Activated naive CD4-positive, alpha-beta T cell treated with anti-CD3 and anti-CD28 coated beads for 36 hours (primary cell): ENCODE measurements at regions of chr1 and their contacts with region 1.

Region 1: GRCh38 chr1:176374967-176375569 is 87.9 kb upstream of the PAPPA2 start:
- DNase-seq: peak; percentile 87
- H3K4me3 Mint-ChIP-seq: no peak overlapping the region
- H3K27ac Mint-ChIP-seq: no peak overlapping the region
- H3K4me1 Mint-ChIP-seq: no peaks in the 10 kb centered on the region
- H3K27me3 Mint-ChIP-seq: peaks cover 10% of the 10 kb centered on the region

Region 2: GRCh38 chr1:175481126-175482066 is 893.7 kb before region 1 on chr1:
- CTCF ChIA-PET with region 1: no interaction called
- intact Hi-C with region 1: loop called (anchors 10 kb)
- DNase-seq: no peak
- H3K4me3 Mint-ChIP-seq: no peak overlapping the region
- H3K27ac Mint-ChIP-seq: no peak overlapping the region
- H3K4me1 Mint-ChIP-seq: no peaks in the 10 kb centered on the region
- H3K27me3 Mint-ChIP-seq: peaks cover 19% of the 10 kb centered on the region

Region 3: GRCh38 chr1:176460544-176461336 is 85.7 kb after region 1 on chr1:
- CTCF ChIA-PET with region 1: no interaction called
- intact Hi-C with region 1: no loop called
- DNase-seq: no peak
- H3K4me3 Mint-ChIP-seq: no peak overlapping the region
- H3K27ac Mint-ChIP-seq: no peak overlapping the region
- H3K4me1 Mint-ChIP-seq: no peaks in the 10 kb centered on the region
- H3K27me3 Mint-ChIP-seq: peaks cover 2% of the 10 kb centered on the region

Region 4: GRCh38 chr1:176485083-176485482 is 110.0 kb after region 1 on chr1:
- CTCF ChIA-PET with region 1: no interaction called
- intact Hi-C with region 1: no loop called
- DNase-seq: no peak
- H3K4me3 Mint-ChIP-seq: no peak overlapping the region
- H3K27ac Mint-ChIP-seq: no peak overlapping the region
- H3K4me1 Mint-ChIP-seq: no peaks in the 10 kb centered on the region
- H3K27me3 Mint-ChIP-seq: peaks cover 5% of the 10 kb centered on the region

Region 5: DNA sequence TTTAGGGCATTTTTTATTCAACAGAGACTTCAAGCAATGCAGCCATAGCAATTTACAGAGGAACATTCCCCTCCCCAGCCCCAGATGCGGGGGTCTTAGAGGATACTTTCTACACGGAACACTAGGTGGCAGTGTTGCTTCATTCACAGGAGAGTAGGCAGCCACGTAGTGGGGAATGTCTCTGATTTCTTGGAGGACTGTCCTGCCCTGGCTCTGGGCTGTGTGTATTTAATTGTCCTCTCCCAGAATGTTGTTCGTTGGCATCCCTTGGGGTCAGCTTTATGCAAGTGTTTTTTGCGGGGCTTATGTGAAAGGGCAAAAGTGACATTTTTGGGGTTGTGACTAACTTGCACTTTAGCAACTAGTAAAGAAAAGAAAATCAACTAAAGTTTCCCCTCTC is 184.8 kb after region 1 on chr1:
- CTCF ChIA-PET with region 1: interaction called, 3 read pairs
- intact Hi-C with region 1: loop called (anchors 5 kb)
- DNase-seq: peak; percentile 38
- H3K4me3 Mint-ChIP-seq: no peak overlapping the region
- H3K27ac Mint-ChIP-seq: no peak overlapping the region
- H3K4me1 Mint-ChIP-seq: no peaks in the 10 kb centered on the region
- H3K27me3 Mint-ChIP-seq: peaks cover 12% of the 10 kb centered on the region

Region 6: GRCh38 chr1:176880954-176881595 is 506.0 kb after region 1 on chr1:
- CTCF ChIA-PET with region 1: no interaction called
- intact Hi-C with region 1: loop called (anchors 1 kb)
- DNase-seq: peak; percentile 65
- H3K4me3 Mint-ChIP-seq: no peak overlapping the region
- H3K27ac Mint-ChIP-seq: no peak overlapping the region
- H3K4me1 Mint-ChIP-seq: no peaks in the 10 kb centered on the region
- H3K27me3 Mint-ChIP-seq: no peaks in the 10 kb centered on the region

Region 7: DNA sequence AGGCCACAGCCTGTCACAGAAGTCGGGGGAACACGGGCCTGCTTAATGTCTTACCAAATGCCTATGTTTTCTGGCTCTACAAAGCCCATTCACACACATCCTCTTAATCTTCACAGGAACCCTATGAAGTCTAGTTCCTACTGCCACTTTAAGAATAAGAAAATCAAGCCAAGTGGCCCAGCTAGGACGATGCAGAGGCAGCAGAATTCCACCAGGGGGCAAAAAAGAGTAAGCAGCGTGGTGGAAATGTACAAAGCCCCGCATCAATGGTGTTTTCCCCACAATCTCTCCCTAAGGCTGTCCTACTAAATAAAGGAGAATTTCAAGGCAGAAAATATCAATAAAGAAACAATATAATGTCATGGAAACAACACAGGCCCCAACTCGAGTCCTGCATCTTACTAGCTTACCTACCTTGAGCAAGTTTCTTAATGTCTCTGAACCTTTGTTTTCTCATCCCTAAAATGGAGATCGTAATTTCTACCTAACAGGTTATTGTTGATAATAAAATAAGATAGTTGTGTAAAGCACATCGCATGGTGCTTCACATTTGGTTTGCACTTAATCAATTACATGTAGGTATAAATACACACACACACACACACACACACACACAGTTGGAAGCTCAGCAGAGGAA is 1573.4 kb after region 1 on chr1:
- CTCF ChIA-PET with region 1: no interaction called
- intact Hi-C with region 1: loop called (anchors 5 kb)
- DNase-seq: peak; percentile 44
- H3K4me3 Mint-ChIP-seq: no peak overlapping the region
- H3K27ac Mint-ChIP-seq: no peak overlapping the region
- H3K4me1 Mint-ChIP-seq: no peaks in the 10 kb centered on the region
- H3K27me3 Mint-ChIP-seq: peaks cover 7% of the 10 kb centered on the region